ENCODE measurements at regions of chr3 and their contacts with region 1.

Region 1: GRCh38 chr3:136390574-136390973 is 140.4 kb downstream of the PCCB start:
- DNase-seq: no peak
- H3K4me3 Mint-ChIP-seq: no peak overlapping the region
- H3K27ac Mint-ChIP-seq: no peak overlapping the region
- H3K4me1 Mint-ChIP-seq: no peaks in the 10 kb centered on the region
- H3K27me3 Mint-ChIP-seq: no peaks in the 10 kb centered on the region

Region 2: GRCh38 chr3:137013955-137014688 is 623.5 kb after region 1 on chr3:
- intact Hi-C with region 1: loop called (anchors 1 kb)
- DNase-seq: peak; percentile 95
- H3K4me3 Mint-ChIP-seq: peak overlapping the region; percentile 77
- H3K27ac Mint-ChIP-seq: no peak overlapping the region
- H3K4me1 Mint-ChIP-seq: peaks cover 10% of the 10 kb centered on the region
- H3K27me3 Mint-ChIP-seq: peaks cover 3% of the 10 kb centered on the region